Naive thymus-derived CD8-positive, alpha-beta T cell (primary cell): ENCODE measurements at regions of chr6 and their contacts with region 1.

Region 1: GRCh38 chr6:30453508-30454116 is 35.7 kb upstream of the HLA-E start:
- DNase-seq: peak; percentile 71 to 93 (median 82)
- ATAC-seq: peak; percentile 69 to 73
- H3K4me3 Mint-ChIP-seq: peak overlapping the region in 9 of 10 donors; percentile 42 to 75 (median 67)
- H3K27ac Mint-ChIP-seq: peak overlapping the region in 1 of 10 donors; percentile 24
- H3K4me1 Mint-ChIP-seq: peaks cover 28 to 49% (median 44%) of the 10 kb centered on the region in 4 donors
- H3K27me3 Mint-ChIP-seq: peaks cover 41 to 96% (median 72%) of the 10 kb centered on the region in 5 donors

Region 2: GRCh38 chr6:30463651-30464618 is 10.3 kb after region 1 on chr6:
- POLR2A ChIA-PET with region 1: interaction called, 16 read pairs
- DNase-seq: peak in 8 of 10 donors; percentile 31 to 69 (median 52)
- ATAC-seq: peak; percentile 52 to 61
- H3K4me3 Mint-ChIP-seq: peak overlapping the region in 9 of 10 donors; percentile 6 to 91 (median 49)
- H3K27ac Mint-ChIP-seq: no peak overlapping the region
- H3K4me1 Mint-ChIP-seq: peaks cover 16 to 54% (median 44%) of the 10 kb centered on the region in 4 donors
- H3K27me3 Mint-ChIP-seq: peaks cover 62 to 95% (median 72%) of the 10 kb centered on the region in 5 donors